ENCODE measurements at regions of chr7 and their contacts with region 1.

Region 1: DNA sequence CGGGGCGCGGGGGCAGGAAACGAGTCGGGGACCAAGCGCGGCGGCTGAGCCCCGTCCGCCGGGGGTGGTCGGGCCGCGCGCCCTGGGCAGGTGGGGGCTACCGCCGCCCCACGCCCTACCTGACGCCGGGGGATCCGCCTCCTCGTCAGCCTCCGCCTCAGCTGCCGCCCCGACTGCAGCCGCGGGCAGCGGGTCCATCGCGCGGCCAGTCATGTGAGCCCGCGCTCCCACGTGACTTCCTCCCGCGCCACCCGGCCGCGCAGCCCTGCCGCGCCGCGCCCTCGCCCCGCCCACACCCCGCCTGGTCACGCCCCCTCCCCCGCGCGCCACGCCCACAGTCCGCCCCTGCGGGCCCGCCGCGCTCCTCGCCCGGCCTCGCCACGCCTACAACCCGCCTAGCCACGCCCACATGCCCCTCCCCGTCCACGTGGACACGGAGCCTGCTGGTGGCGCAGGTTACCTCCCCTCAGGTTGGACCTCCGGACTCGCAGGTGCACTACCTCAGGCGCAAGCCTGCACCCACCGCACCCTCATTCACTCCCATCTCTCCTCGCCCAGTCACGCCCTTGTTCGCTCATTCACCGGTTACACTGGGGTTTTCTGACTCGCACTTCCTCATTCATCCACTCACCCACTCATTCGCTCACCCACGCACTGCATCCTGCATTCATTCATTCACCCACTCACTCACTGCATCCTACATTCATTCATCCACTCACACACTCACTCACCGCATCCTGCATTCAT is at the start of gene SNX8:
- DNase-seq: peak; percentile 81 to 95 (median 86)
- H3K4me3 ChIP-seq: peak within 1 kb of the TSS; percentile 62 to 99 (median 90)
- H3K27ac ChIP-seq: peak within 1 kb of the TSS in 54 of 59 donors; percentile 4 to 90 (median 70)
- H3K27me3 ChIP-seq: no peaks in the 10 kb centered on the region
- CTCF ChIP-seq: peak in 7 of 56 donors; percentile 8 to 33 (median 16)
- total RNA-seq, gene SNX8: 18.8 to 54.8 (median 30.8) TPM

Region 2: GRCh38 chr7:1520574-1521234 is 793.7 kb before region 1 on chr7:
- intact Hi-C with region 1: loop called in 1 of 2 experiments (anchors 10 kb)
- DNase-seq: no peak
- H3K4me3 ChIP-seq: no peak overlapping the region
- H3K27ac ChIP-seq: peak overlapping the region in 11 of 59 donors; percentile 2 to 71 (median 35)
- H3K27me3 ChIP-seq: peaks cover 0 to 11% (median 0%) of the 10 kb centered on the region in 45 donors
- CTCF ChIP-seq: no peak

Region 3: GRCh38 chr7:2241580-2242540 is 72.5 kb before region 1 on chr7 and contains the starts of genes MRM2 and NUDT1:
- intact Hi-C with region 1: loop called (anchors 5 kb)
- DNase-seq: peak; percentile 71 to 91 (median 81)
- H3K4me3 ChIP-seq: peak within 1 kb of the TSS; percentile 57 to 100 (median 94)
- H3K27ac ChIP-seq: peak within 1 kb of the TSS in 39 of 59 donors; percentile 10 to 84 (median 54)
- H3K27me3 ChIP-seq: no peaks in the 10 kb centered on the region
- CTCF ChIP-seq: peak in 13 of 56 donors; percentile 9 to 42 (median 18)
- total RNA-seq, gene MRM2: 12.1 to 24.5 (median 18.5) TPM
- total RNA-seq, gene NUDT1: 2.3 to 17.6 (median 9.9) TPM

Region 4: DNA sequence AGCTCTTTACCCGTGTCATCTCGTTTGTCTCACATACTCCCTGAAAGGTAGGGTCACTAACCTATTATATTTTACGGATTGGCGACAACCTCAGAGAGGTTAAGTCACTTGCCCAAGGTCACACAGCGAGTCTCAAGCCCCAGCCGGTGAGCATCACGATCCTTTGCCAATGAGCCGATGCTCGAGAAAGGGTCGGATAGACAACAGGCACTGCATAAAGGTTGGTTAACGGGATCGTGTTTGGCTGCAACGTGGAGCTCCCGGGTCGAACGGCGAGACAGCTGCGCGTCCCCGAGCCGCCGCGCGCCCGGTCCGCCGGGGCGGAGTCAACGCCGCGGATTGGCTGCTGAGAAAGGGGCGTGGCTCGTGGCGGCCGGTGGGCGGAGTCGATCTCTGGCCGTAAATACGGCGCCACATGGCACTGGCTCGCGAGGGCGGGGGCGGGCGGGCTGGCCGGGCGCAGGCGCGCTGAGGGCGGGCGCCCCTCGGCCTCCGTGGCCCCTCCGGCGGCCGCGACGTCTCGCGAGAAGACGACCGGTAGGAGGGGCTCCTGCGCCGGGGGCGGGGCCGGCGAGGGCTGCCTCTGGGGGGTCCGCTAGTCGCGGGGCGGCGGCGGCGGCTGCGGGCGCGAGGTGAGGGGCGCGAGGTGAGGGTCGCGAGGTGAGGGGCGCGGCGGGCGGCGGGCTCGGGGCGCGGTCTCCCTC is 88.8 kb after region 1 on chr7 and contains the start of gene CHST12:
- intact Hi-C with region 1: loop called in 1 of 2 experiments (anchors 10 kb)
- DNase-seq: peak; percentile 88 to 97 (median 94)
- H3K4me3 ChIP-seq: peak within 1 kb of the TSS; percentile 69 to 99 (median 89)
- H3K27ac ChIP-seq: peak within 1 kb of the TSS in 51 of 59 donors; percentile 2 to 88 (median 69)
- H3K27me3 ChIP-seq: no peaks in the 10 kb centered on the region
- CTCF ChIP-seq: peak in 9 of 56 donors; percentile 5 to 41 (median 19)
- total RNA-seq, gene CHST12: 19.5 to 66.3 (median 29.6) TPM

Region 5: DNA sequence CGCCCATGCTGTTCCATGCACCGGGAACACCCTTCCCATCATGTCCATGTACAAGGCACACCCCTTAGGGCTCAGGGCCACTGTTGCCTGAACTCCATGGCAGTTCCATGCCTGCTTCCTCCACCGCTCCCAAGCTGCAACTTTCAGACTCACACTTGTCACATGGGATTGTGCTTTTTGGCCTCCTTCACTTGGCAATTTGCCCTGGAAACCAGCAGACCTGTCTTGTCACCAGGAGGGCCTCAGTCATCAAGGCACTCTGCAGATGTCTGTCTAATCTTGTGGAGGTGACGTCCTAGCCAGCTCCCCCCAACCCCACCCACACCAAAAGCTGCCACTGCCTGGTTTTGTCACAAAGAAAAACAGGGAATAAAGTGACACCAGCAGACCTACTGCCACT is 681.8 kb after region 1 on chr7:
- intact Hi-C with region 1: no loop called
- DNase-seq: peak in 2 of 10 donors; percentile 11 to 20
- H3K4me3 ChIP-seq: no peak overlapping the region
- H3K27ac ChIP-seq: no peak overlapping the region
- H3K27me3 ChIP-seq: no peaks in the 10 kb centered on the region
- CTCF ChIP-seq: no peak

Measured in dorsolateral prefrontal cortex (tissue), 120 donors.